ENCODE measurements at regions of chr3 and their contacts with region 1.

Region 1: GRCh38 chr3:102180291-102181039 is 254.3 kb upstream of the ZPLD1 start:
- DNase-seq: peak; percentile 94
- H3K4me3 ChIP-seq: peak overlapping the region in 1 of 3 experiments; percentile 7
- H3K27ac ChIP-seq: peak overlapping the region; percentile 97
- H3K4me1 ChIP-seq: peaks cover 64% of the 10 kb centered on the region
- H3K27me3 ChIP-seq: peaks cover 0 to 4% of the 10 kb centered on the region in 2 experiments
- CTCF ChIP-seq: no peak
- POLR2A ChIP-seq: no peak

Region 2: DNA sequence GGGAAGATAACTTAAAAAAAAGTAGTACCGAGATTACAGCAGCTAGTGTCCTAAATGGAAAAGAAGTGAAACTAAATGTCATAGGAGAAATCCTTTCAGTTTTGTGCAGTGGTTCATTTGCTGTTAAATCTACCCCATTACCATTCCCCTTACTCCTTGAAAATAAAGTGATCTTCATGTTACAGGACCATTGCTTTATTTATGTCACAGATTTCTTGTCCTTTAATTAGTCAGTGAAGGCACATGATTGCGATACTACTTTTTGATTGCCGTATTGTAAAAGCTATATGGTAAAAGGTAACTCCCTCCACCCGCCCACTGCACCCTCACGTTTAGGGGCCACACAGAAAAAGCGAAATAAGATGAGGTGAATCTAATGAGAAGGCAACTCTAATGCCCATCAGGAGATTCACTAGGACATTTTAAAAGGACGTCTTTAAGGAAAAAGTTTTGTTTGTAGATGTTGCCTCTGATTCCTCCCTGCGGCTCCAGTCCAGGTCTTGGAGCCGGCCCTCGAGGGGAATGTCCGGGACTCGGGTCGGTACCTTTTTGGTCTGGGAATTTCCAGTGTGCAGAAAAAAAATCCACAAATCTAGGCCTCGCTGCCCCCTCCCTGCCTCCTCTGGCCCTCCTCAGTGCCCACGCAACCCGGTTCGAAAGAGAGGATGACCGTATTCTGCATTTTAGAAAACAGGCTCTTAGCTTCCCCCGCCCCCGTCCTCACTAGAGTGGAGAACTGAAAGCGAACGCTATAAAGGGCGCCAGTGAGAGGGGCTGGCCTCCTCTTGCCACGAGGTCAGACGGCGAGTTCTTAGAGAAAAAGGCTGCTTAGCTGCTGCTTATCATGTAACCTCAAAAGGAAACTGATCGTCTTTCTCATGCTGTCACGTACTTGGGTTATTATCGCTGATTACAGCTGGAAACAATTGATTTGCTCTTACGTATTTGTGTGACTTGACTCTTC is 353.0 kb before region 1 on chr3:
- CTCF ChIA-PET with region 1: interaction called, 4 read pairs
- POLR2A ChIA-PET with region 1: no interaction called
- dilution Hi-C with region 1: no loop called
- intact Hi-C with region 1: loop called (anchors 1 kb)
- DNase-seq: peak; percentile 87
- H3K4me3 ChIP-seq: peak overlapping the region; percentile 56 to 70 (median 61)
- H3K27ac ChIP-seq: peak overlapping the region; percentile 82
- H3K4me1 ChIP-seq: peaks cover 12% of the 10 kb centered on the region
- H3K27me3 ChIP-seq: no peaks in the 10 kb centered on the region
- CTCF ChIP-seq: no peak
- POLR2A ChIP-seq: no peak

Region 3: DNA sequence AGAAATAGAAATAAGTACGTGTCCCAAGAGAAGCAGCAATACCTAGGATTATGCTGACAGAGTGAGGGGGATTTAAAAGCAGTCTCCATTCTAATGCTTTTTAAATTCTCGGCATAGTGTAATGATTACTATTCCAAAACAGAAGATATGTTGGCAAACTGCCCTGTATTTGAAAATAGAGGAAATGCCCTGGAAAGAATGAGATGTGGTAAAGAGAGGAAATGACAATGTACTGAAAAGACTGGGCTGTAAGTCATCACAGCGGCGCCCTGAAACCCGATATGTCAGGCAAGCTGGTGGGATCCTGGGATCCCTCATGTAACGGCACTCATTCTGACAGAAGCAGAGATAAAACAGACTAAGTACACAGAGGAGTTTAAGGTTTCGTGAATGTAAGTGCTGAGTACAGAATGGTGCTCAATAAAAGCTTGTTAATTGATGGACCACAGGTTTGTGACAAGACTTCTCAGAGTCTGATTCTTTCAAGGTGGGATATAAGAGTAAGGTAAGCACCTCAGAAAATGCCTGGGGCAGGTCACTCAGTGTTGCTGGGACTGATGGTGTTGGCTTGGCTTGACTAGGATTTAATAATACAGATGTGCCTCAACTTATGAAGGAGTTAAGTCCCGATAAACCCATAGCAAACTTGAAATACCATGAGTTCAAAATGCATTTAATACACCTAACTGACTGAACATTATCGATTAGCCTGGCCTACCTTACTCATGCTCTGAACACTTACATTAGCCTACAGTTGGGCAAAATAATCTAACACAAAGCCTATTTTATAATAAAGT is 239.7 kb before region 1 on chr3:
- CTCF ChIA-PET with region 1: interaction called, 3 read pairs
- POLR2A ChIA-PET with region 1: no interaction called
- dilution Hi-C with region 1: no loop called
- intact Hi-C with region 1: loop called (anchors 1 kb)
- DNase-seq: peak; percentile 94
- H3K4me3 ChIP-seq: peak overlapping the region in 1 of 3 experiments; percentile 46
- H3K27ac ChIP-seq: peak overlapping the region; percentile 88
- H3K4me1 ChIP-seq: peaks cover 51% of the 10 kb centered on the region
- H3K27me3 ChIP-seq: no peaks in the 10 kb centered on the region
- CTCF ChIP-seq: no peak
- POLR2A ChIP-seq: no peak

Region 4: GRCh38 chr3:102129760-102130608 is 50.5 kb before region 1 on chr3:
- CTCF ChIA-PET with region 1: no interaction called
- POLR2A ChIA-PET with region 1: no interaction called
- dilution Hi-C with region 1: no loop called
- intact Hi-C with region 1: loop called (anchors 2 kb)
- DNase-seq: peak; percentile 88
- H3K4me3 ChIP-seq: no peak overlapping the region
- H3K27ac ChIP-seq: peak overlapping the region; percentile 61
- H3K4me1 ChIP-seq: peaks cover 23% of the 10 kb centered on the region
- H3K27me3 ChIP-seq: no peaks in the 10 kb centered on the region
- CTCF ChIP-seq: no peak
- POLR2A ChIP-seq: no peak

Region 5: DNA sequence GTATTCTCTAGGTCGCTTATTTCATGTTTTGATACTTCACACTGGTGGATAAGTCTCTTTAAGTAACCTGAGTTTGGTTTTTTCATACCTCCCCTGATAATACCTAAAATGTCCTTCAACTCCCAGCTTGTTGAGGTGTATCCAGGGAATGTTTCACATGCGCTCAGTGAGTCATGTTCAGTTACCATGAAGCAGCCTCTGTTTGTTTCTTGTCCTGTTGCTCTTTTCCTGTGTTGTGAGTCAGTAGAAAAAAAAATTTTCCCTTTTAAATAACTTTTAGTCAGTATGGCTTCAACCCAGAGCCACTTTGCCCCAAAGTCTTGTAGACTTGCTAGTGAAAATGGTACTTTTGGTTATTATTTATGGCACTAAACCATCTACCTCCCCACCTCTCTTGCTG is 24.0 kb before region 1 on chr3:
- CTCF ChIA-PET with region 1: interaction called, 3 read pairs
- POLR2A ChIA-PET with region 1: interaction called, 6 read pairs
- dilution Hi-C with region 1: no loop called
- intact Hi-C with region 1: loop called (anchors 1 kb)
- DNase-seq: peak; percentile 93
- H3K4me3 ChIP-seq: no peak overlapping the region
- H3K27ac ChIP-seq: peak overlapping the region; percentile 91
- H3K4me1 ChIP-seq: peaks cover 17% of the 10 kb centered on the region
- H3K27me3 ChIP-seq: no peaks in the 10 kb centered on the region
- CTCF ChIP-seq: no peak
- POLR2A ChIP-seq: no peak

Region 6: DNA sequence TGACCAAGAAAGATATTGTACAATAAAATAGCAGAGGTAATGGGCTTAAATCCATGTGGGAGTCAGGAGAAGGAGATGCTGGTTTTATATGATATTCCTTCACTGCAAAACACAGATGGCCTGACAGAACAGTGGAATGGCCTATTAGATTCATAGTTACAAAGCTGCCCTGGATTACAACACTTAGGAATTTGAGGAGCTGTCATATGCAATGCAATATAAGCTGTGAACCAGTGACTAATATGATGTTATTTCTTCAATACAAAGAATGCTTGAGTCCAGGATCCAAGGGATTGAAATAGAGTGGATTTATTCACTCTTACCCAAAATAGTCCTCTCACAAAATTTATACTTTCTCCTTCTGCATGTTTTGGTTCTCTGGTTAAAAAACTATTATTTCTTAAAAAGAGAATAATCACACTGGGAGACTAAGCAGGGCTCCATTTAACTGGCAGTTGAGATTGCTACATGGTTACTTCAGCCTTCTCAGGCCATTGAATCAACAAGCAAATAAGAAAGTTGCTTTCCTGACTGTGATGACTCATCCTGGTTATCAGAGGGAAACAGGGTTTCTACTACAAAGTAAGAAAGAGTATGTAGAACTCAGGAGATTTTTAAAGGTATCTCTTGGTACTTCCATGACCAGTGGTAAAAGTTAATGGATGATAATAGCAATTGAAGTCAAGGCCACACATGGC is 174.5 kb after region 1 on chr3:
- CTCF ChIA-PET with region 1: no interaction called
- POLR2A ChIA-PET with region 1: no interaction called
- dilution Hi-C with region 1: no loop called
- intact Hi-C with region 1: no loop called
- DNase-seq: peak; percentile 51
- H3K4me3 ChIP-seq: no peak overlapping the region
- H3K27ac ChIP-seq: no peak overlapping the region
- H3K4me1 ChIP-seq: no peaks in the 10 kb centered on the region
- H3K27me3 ChIP-seq: peaks cover under 1 to 2% of the 10 kb centered on the region in 2 experiments
- CTCF ChIP-seq: no peak
- POLR2A ChIP-seq: no peak

Measured in endothelial cell of umbilical vein (primary cell).